A549 (cell line): ENCODE measurements at regions of chr9 and their contacts with region 1.

Region 1: GRCh38 chr9:98087420-98088354 is 31.2 kb downstream of the NANS start:
- DNase-seq: no peak
- ATAC-seq: no peak; a peak in 1 of 6 replicates
- H3K4me3 ChIP-seq: no peak overlapping the region
- H3K27ac ChIP-seq: no peak overlapping the region
- H3K4me1 ChIP-seq: no peaks in the 10 kb centered on the region
- CTCF ChIP-seq: no peak
- EP300 ChIP-seq: no peak
- POLR2A ChIP-seq: no peak
- RAD21 ChIP-seq: no peak

Region 2: GRCh38 chr9:97923529-97924108 is 164.1 kb before region 1 on chr9:
- CTCF ChIA-PET with region 1: no interaction called
- POLR2A ChIA-PET with region 1: no interaction called
- DNase-seq: peak; percentile 51 to 85
- ATAC-seq: peak; percentile 60 to 72; a peak in 5 of 6 replicates
- H3K4me3 ChIP-seq: peak overlapping the region; percentile 55; the same call in 2 of the 3 replicates
- H3K27ac ChIP-seq: peak overlapping the region; percentile 48 to 95; a peak in 3 of 6 replicates
- H3K4me1 ChIP-seq: 0 out of 3 replicates have a peak, but pooled peaks cover 5% of the 10 kb centered on the region
- CTCF ChIP-seq: peak; percentile 99
- EP300 ChIP-seq: no peak
- POLR2A ChIP-seq: no peak
- RAD21 ChIP-seq: peak; percentile 45 to 91

Region 3: DNA sequence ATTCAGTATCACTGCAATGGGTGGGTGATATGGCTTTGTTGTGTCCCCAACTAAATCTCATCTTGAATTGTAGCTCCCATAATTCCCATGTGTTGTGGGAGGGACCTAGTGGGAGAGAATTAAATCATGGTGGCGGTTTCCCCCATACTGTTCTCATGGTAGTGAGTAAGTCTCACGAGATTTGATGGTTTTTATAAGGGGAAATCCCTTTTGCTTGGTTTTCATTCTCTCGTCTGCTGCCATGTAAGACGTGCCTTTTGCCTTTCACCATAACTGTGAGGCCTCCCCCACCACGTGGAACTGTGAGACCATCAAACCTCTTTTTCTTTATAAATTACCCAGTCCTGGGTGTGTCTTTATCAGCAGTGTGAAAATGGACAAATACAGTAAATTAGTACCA is 40.7 kb before region 1 on chr9:
- CTCF ChIA-PET with region 1: no interaction called
- POLR2A ChIA-PET with region 1: no interaction called
- DNase-seq: no peak
- ATAC-seq: no peak
- H3K4me3 ChIP-seq: no peak overlapping the region
- H3K27ac ChIP-seq: no peak overlapping the region
- H3K4me1 ChIP-seq: no peaks in the 10 kb centered on the region
- CTCF ChIP-seq: no peak
- EP300 ChIP-seq: no peak
- POLR2A ChIP-seq: no peak
- RAD21 ChIP-seq: no peak

Region 4: DNA sequence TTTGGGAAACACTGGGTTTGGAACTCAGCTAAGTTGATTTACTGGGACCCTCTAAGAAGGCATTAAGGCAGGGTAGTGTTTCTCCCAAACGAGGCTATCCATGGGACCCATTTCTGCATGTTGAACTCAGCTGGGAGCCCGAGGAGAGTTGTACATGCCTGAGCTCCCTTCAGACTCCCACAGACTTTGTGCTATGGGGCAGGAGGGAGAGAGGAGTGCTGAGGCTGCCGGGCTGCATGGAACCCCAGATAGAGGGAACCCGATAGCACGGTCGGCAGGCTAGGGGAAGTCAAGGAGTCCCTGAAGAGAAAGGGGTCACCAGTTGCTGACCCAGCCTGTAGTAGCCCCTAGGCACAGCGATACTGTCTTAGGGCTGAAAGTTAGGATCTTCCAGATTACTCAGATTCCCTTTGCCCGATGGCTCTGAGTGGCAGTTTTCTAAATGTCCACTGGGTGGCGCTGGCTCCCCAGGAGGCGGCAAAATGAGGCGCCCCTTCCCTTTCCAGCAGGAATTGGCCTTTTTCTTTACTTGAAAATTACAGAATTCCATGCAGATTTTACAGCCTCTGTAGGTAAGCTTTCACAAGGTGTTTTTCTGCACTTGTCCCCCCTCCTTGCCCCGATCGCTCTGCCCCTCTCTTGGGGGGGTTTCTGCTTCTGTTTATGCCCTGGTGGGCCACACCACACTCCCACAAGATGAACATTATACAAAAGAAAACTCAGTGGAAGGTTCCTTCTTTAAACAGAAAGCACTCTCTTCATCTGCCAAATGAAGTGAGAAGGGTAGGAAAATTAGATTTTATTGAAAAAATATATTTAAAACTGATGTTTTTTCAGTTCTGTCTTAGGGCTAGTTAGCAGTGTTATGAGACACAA is 13.3 kb before region 1 on chr9:
- CTCF ChIA-PET with region 1: interaction called, 15 read pairs
- POLR2A ChIA-PET with region 1: no interaction called
- DNase-seq: peak; percentile 55 to 65
- ATAC-seq: peak; percentile 72 to 81
- H3K4me3 ChIP-seq: no peak overlapping the region
- H3K27ac ChIP-seq: peak overlapping the region; percentile 54 to 70; a peak in 5 of 6 replicates
- H3K4me1 ChIP-seq: peaks cover 28% of the 10 kb centered on the region
- CTCF ChIP-seq: peak; percentile 91
- EP300 ChIP-seq: no peak
- POLR2A ChIP-seq: no peak
- RAD21 ChIP-seq: peak; percentile 82 to 86